ENCODE measurements at regions of chr10 and their contacts with region 1.

Region 1: GRCh38 chr10:47326306-47326926 is 4.2 kb downstream of the GDF2 start:
- DNase-seq: peak; percentile 44 to 61
- H3K4me3 ChIP-seq: no peak overlapping the region
- H3K27ac ChIP-seq: no peak overlapping the region
- H3K4me1 ChIP-seq: peaks cover 22% of the 10 kb centered on the region
- H3K27me3 ChIP-seq: no peaks in the 10 kb centered on the region
- CTCF ChIP-seq: no peak

Region 2: GRCh38 chr10:47118326-47118725 is 208.1 kb before region 1 on chr10:
- CTCF ChIA-PET with region 1: interaction called, 13 read pairs
- POLR2A ChIA-PET with region 1: no interaction called
- intact Hi-C with region 1: no loop called
- DNase-seq: no peak
- H3K4me3 ChIP-seq: no peak overlapping the region
- H3K27ac ChIP-seq: no peak overlapping the region
- H3K4me1 ChIP-seq: no peaks in the 10 kb centered on the region
- H3K27me3 ChIP-seq: no peaks in the 10 kb centered on the region
- CTCF ChIP-seq: no peak

Region 3: DNA sequence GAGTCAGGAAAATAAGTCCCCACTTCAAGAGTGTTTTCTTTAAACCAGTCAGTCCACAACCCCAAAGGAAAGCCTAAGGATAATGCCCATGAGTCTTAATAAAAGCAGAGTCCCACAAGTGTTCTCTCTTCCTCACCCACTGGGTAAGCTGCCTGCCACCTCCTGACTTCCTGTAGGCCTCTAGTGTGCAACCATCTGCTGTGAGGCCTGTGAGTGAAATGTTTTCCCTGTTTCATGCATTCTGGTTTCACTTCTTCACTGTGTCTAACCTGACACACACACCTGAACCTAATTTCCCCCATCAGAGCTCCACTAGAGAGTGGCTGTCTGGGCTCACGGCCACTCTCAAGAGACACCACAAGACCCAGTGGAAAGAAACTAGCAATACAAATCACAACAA is 65.3 kb before region 1 on chr10:
- CTCF ChIA-PET with region 1: no interaction called
- POLR2A ChIA-PET with region 1: no interaction called
- intact Hi-C with region 1: no loop called
- DNase-seq: no peak
- H3K4me3 ChIP-seq: no peak overlapping the region
- H3K27ac ChIP-seq: no peak overlapping the region
- H3K4me1 ChIP-seq: no peaks in the 10 kb centered on the region
- H3K27me3 ChIP-seq: peaks cover 17% of the 10 kb centered on the region; the same call in 1 of the 2 replicates
- CTCF ChIP-seq: no peak

Region 4: GRCh38 chr10:47449102-47449979 is 122.9 kb after region 1 on chr10:
- CTCF ChIA-PET with region 1: no interaction called
- POLR2A ChIA-PET with region 1: no interaction called
- intact Hi-C with region 1: no loop called
- DNase-seq: no peak
- H3K4me3 ChIP-seq: no peak overlapping the region
- H3K27ac ChIP-seq: no peak overlapping the region
- H3K4me1 ChIP-seq: no peaks in the 10 kb centered on the region
- H3K27me3 ChIP-seq: no peaks in the 10 kb centered on the region
- CTCF ChIP-seq: no peak

Measured in PC-9 (cell line).